ENCODE measurements at regions of chr17 and their contacts with region 1.

Region 1: DNA sequence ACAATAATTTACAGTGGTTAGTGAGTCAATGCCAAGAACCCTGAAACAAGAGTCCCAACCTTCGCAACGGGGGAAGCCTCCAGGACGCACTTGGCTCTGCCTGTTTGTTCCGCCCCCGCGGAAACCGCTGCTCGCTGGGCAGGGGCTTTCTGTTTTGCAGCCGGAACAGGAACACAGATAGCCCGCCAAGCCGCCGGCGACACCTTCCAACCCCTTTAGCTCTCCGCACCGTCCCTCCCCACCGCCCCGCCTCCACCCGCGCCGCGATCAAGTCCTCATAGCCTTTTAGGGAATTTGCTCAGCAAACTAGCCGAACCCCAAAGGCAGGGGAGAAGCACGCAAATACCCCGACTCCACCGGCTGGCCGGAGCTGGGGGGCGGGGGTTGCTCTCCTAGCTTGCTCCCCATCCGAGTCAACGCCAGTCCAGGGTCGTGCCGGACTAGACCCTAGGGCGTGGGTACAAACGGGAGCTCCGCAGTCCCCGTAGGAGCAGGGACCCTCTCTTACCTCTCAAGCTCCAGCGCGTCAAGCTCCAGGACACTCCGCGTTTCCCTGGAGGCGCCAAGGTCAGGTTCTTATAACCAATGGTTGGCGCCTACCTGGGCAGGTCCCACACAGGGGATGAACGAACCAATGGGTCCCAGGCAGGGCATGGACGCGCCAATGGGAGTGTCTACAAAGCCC is at the start of gene SLFN13:
- DNase-seq: peak; percentile 68 to 90 (median 80)
- ATAC-seq: peak; percentile 96 to 97
- H3K4me3 Mint-ChIP-seq: peak within 1 kb of the TSS; percentile 77 to 92 (median 86)
- H3K27ac Mint-ChIP-seq: peak within 1 kb of the TSS; percentile 82 to 94 (median 92)
- H3K4me1 Mint-ChIP-seq: peaks cover 2 to 28% (median 17%) of the 10 kb centered on the region in 4 donors
- H3K27me3 Mint-ChIP-seq: no peaks in the 10 kb centered on the region
- polyA plus RNA-seq, gene SLFN13: 3.2 to 9.5 (median 3.4) TPM

Region 2: DNA sequence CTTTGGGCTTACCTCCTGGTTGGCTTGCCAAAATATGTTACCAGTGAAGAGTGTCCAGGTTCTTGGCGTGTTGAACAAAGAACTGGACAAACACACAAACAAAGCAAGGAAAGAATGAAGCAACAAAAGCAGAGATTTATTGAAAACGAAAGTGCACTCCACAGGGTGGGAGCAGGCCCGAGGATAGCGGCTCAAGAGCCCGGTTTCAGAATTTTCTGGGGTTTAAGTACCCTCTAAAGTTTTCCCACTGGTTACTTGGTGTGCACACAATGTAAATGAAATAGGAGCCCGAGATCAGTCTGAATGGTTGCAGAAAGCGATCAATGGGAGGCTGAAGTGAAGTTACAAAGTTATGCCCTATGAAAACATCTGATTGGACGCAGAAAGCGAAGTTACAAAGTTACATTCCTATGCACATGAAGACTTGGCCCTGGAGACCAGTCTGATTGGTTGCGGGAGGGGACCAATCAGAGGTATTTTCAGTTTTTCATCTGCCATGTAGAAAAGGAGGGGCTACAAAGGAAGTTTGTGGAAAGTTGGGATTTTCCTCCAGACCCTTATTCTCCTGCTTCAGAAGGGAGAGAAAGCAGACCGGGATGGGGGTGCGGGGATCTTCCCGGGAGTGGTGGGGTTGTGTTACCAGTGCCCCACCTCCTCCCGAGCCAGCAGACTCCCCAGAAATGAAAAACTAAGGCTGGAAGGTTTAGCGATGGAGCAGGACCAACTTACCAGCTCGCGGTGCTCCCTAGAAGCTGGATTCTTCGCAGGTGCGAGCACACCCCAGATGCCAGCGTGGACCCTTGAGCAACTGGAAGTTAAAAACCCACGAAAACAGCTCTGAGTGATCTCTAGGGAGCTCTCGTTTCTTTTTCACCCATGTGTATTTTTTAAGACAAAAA is 15.9 kb before region 1 on chr17 and contains the start of gene SLFN12:
- POLR2A ChIA-PET with region 1: interaction called, 16 read pairs
- DNase-seq: peak in 9 of 10 donors; percentile 39 to 81 (median 61)
- ATAC-seq: peak; percentile 89 to 92
- H3K4me3 Mint-ChIP-seq: peak within 1 kb of the TSS; percentile 89 to 100 (median 96)
- H3K27ac Mint-ChIP-seq: peak within 1 kb of the TSS; percentile 87 to 98 (median 95)
- H3K4me1 Mint-ChIP-seq: peaks cover 24 to 66% (median 63%) of the 10 kb centered on the region in 4 donors
- H3K27me3 Mint-ChIP-seq: no peaks in the 10 kb centered on the region
- polyA plus RNA-seq, gene SLFN12: 2.0 to 3.1 (median 2.1) TPM

Region 3: GRCh38 chr17:35460354-35460851 is 12.0 kb after region 1 on chr17:
- POLR2A ChIA-PET with region 1: interaction called, 18 read pairs
- DNase-seq: peak; percentile 31 to 84 (median 70)
- ATAC-seq: peak; percentile 86 to 94
- H3K4me3 Mint-ChIP-seq: peak overlapping the region; percentile 70 to 91 (median 83)
- H3K27ac Mint-ChIP-seq: peak overlapping the region; percentile 83 to 97 (median 92)
- H3K4me1 Mint-ChIP-seq: peaks cover 11 to 45% (median 27%) of the 10 kb centered on the region in 4 donors
- H3K27me3 Mint-ChIP-seq: no peaks in the 10 kb centered on the region

Region 4: GRCh38 chr17:35467824-35468223 is 19.5 kb after region 1 on chr17:
- POLR2A ChIA-PET with region 1: interaction called, 18 read pairs
- DNase-seq: peak in 4 of 10 donors; percentile 14 to 41 (median 37)
- ATAC-seq: peak; percentile 86 to 96
- H3K4me3 Mint-ChIP-seq: peak overlapping the region in 9 of 10 donors; percentile 26 to 74 (median 55)
- H3K27ac Mint-ChIP-seq: peak overlapping the region; percentile 74 to 90 (median 85)
- H3K4me1 Mint-ChIP-seq: peaks cover 18 to 48% (median 45%) of the 10 kb centered on the region in 4 donors
- H3K27me3 Mint-ChIP-seq: no peaks in the 10 kb centered on the region

Region 5: DNA sequence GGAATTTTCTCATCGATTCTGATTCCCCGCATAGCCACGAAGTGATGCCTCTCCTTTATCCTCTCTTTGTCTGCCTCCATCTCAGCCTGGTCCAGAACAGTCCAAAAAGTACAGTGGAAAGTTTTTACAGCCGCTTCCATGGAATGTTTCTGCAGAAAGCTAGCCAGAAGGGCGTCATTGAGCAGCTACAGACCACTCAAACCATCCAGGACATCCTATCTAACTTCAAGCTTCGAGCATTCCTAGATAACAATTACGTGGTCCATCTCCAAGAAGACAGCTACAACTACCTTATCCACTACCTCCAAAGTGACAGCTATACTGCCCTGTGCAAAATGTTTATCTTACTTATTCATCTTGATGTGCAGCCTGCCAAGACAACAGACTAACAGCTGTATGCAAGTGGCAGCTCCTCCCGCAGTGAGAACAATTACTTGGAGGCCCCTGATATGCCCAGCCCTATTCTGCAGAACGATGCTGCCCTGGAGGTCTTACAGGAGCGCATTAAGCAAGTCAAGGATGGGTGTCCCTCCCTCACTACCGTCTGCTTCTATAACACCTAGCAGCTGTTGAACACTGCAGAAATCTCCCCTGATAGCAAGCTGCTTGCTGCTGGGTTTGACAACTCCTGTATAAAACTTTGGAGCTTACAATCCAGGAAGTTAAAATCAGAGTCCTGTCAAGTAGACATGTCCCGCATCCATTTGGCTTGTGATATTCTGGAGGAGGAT is 50.3 kb after region 1 on chr17:
- POLR2A ChIA-PET with region 1: no interaction called
- DNase-seq: no peak
- ATAC-seq: peak in 1 of 2 donors; percentile 30
- H3K4me3 Mint-ChIP-seq: peak overlapping the region; percentile 34 to 78 (median 70)
- H3K27ac Mint-ChIP-seq: peak overlapping the region in 9 of 10 donors; percentile 35 to 83 (median 70)
- H3K4me1 Mint-ChIP-seq: peaks cover 38 to 81% (median 68%) of the 10 kb centered on the region in 4 donors
- H3K27me3 Mint-ChIP-seq: peaks cover 0 to 8% (median 0%) of the 10 kb centered on the region in 5 donors

Region 6: GRCh38 chr17:35531160-35531559 is 82.8 kb after region 1 on chr17:
- POLR2A ChIA-PET with region 1: interaction called, 18 read pairs
- DNase-seq: no peak
- ATAC-seq: no peak
- H3K4me3 Mint-ChIP-seq: peak overlapping the region in 8 of 10 donors; percentile 1 to 83 (median 46)
- H3K27ac Mint-ChIP-seq: peak overlapping the region in 8 of 10 donors; percentile 40 to 98 (median 92)
- H3K4me1 Mint-ChIP-seq: peaks cover 37 to 79% (median 69%) of the 10 kb centered on the region in 4 donors
- H3K27me3 Mint-ChIP-seq: no peaks in the 10 kb centered on the region